ENCODE measurements at regions of chr17 and their contacts with region 1.

Region 1: DNA sequence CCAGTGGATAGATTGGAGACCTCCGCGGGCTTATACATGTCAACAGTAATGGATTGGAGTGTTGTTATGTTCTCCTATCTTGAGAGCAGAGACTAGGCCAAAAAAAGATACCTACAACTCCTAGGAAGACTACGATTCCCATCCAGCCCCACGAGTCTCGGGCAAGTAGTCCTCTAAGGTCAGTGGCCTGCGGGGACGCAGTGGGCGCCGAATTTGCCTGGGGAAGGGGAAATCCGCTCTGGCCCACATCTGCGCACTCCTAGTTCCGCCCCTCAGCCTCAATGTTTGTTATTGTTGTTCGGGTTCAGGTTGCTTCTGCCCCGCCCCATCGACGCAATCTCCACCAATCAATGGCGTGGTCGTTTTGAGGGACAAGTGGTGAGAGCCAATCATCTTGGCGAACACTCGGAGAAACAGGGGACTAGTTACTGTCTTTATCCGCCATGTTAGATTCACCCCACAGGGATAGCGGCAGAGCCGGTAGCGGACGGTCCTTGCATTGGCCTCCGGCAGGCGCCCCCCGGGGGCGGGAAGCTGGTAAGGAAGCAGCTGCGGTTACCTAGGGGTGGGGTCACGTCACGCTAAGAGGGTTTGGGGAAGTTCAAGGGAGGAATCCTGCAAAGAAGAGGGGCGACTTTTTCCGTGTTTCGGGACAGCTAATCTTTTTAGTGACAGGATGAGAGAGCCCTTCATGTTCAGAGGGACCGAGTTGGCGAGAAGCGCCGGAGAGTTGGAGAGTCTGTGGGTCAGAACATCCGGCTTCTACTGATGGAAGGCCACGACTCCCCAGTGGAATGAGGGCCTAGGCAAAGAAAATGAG is at the start of gene NBR1:
- DNase-seq: peak; percentile 99
- H3K4me3 ChIP-seq: peak within 1 kb of the TSS; percentile 47 to 75 (median 73)
- H3K27ac ChIP-seq: peak within 1 kb of the TSS; percentile 68
- H3K4me1 ChIP-seq: peaks cover 22% of the 10 kb centered on the region
- H3K27me3 ChIP-seq: no peaks in the 10 kb centered on the region
- CTCF ChIP-seq: no peak
- POLR2A ChIP-seq: peak; percentile 64
- total RNA-seq, gene NBR1: 52.1 and 57.0 TPM in 2 replicates

Region 2: DNA sequence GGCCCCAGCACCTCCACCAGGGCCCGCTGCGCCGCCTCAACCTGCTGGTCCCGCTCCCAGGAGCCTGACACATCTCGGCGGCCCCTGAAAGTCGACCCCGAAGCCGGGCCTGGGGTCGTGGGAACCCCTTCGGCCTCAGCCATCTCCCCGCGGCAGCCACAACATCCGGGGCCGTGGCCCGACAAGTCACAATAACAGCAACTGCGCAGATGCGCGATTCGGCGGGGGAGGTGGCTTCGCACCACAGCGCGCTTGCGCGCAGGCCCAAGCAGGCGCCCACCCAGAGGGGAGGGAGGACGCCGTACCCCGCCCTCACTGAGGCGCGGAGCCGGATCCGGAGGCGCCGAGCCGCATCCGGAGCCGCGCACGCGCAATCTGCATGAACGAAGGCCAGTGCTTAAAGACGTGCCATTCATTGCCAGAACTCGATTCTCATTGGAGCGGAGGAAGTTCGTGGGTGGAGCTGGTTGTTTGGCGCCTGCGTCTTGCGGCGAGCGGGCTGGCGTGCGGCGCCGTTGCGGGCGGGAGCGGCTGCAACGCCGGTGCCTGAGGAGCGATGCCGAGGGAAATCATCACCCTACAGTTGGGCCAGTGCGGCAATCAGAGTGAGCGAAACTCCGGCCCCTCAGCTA is 561.7 kb before region 1 on chr17 and contains the starts of genes RETREG3 and TUBG1:
- CTCF ChIA-PET with region 1: no interaction called
- POLR2A ChIA-PET with region 1: no interaction called
- dilution Hi-C with region 1: no loop called
- intact Hi-C with region 1: loop called (anchors 2 kb)
- DNase-seq: peak; percentile 99
- H3K4me3 ChIP-seq: peak within 1 kb of the TSS; percentile 73 to 81 (median 79)
- H3K27ac ChIP-seq: peak within 1 kb of the TSS; percentile 69
- H3K4me1 ChIP-seq: peaks cover 11% of the 10 kb centered on the region
- H3K27me3 ChIP-seq: no peaks in the 10 kb centered on the region
- CTCF ChIP-seq: peak; percentile 39 to 72
- POLR2A ChIP-seq: peak; percentile 89
- total RNA-seq, gene RETREG3: 52.3 and 53.4 TPM in 2 replicates
- total RNA-seq, gene TUBG1: 96.9 and 102 TPM in 2 replicates

Region 3: GRCh38 chr17:43125133-43125966 is 45.6 kb before region 1 on chr17 and contains the start of gene BRCA1:
- CTCF ChIA-PET with region 1: interaction called, 5 read pairs
- POLR2A ChIA-PET with region 1: no interaction called
- dilution Hi-C with region 1: no loop called
- intact Hi-C with region 1: loop called (anchors 1 kb)
- DNase-seq: peak; percentile 98
- H3K4me3 ChIP-seq: peak within 1 kb of the TSS; percentile 64 to 92 (median 86)
- H3K27ac ChIP-seq: peak within 1 kb of the TSS; percentile 67
- H3K4me1 ChIP-seq: peaks cover 14% of the 10 kb centered on the region
- H3K27me3 ChIP-seq: no peaks in the 10 kb centered on the region
- CTCF ChIP-seq: no peak
- POLR2A ChIP-seq: peak; percentile 69
- total RNA-seq, gene BRCA1: 25.7 and 29.0 TPM in 2 replicates

Region 4: GRCh38 chr17:43193251-43193650 is 22.3 kb after region 1 on chr17:
- CTCF ChIA-PET with region 1: no interaction called
- POLR2A ChIA-PET with region 1: no interaction called
- dilution Hi-C with region 1: no loop called
- intact Hi-C with region 1: no loop called
- DNase-seq: no peak
- H3K4me3 ChIP-seq: no peak overlapping the region
- H3K27ac ChIP-seq: no peak overlapping the region
- H3K4me1 ChIP-seq: no peaks in the 10 kb centered on the region
- H3K27me3 ChIP-seq: no peaks in the 10 kb centered on the region
- CTCF ChIP-seq: no peak
- POLR2A ChIP-seq: no peak

Region 5: DNA sequence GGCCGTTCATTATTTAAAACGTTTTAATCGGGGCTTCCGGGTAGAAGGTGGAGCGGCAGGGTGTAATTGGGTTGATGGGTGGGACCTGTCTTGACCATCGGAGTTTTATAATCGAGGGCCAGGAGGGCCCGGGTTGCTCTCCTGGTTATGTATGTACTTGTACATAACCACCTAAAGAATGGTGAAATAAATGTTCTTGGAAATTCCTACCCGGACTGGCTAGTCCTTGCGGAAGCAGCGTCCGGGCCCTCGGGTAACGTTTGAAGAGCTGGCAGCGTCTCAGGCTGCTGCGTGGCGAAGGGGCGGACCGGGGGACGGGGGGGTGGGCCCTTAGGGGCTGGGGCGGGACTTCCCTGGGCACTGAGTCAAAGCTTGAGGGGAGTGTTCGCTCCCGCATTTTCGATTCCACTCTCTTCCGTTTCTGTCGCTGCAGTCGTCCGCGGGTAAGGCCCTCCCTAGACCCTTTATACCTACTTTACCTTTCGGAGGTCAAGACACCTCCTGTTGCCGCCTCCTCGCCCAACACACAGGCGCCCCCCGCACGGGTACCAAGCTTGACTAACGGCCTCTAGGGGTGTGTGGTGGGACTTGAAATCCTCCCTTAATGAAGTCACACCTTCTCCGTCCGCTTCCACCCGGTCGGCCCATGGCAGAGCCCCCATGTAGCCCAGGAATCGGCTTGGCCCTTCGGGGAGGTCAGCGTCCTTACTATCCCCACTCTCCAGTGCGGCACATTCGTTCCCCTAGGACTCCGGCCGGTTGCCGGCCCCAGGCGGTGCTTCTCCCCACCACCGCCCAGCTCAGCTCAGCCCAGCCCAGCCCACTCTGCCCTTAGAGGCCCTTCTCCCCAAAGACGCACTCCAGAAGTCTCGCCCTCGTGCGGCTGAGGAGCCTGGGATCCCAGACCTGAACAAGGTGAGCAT is 40.8 kb after region 1 on chr17 and contains the start of gene TMEM106A:
- CTCF ChIA-PET with region 1: interaction called, 14 read pairs
- POLR2A ChIA-PET with region 1: interaction called, 3 read pairs
- dilution Hi-C with region 1: no loop called
- intact Hi-C with region 1: loop called (anchors 1 kb)
- DNase-seq: peak; percentile 87
- H3K4me3 ChIP-seq: peak within 1 kb of the TSS; percentile 72 to 79 (median 75)
- H3K27ac ChIP-seq: peak within 1 kb of the TSS; percentile 72
- H3K4me1 ChIP-seq: peaks cover 16% of the 10 kb centered on the region
- H3K27me3 ChIP-seq: no peaks in the 10 kb centered on the region
- CTCF ChIP-seq: peak in 1 of 2 donors; percentile 47
- POLR2A ChIP-seq: peak; percentile 96
- total RNA-seq, gene TMEM106A: 11.5 and 14.8 TPM in 2 replicates